Activated CD4-positive, alpha-beta T cell treated with anti-CD3 and anti-CD28 coated beads for 36 hours (primary cell): ENCODE measurements at regions of chr3 and their contacts with region 1.

Region 1: GRCh38 chr3:47781685-47782445 is at the start of gene SMARCC1:
- DNase-seq: peak; percentile 99
- ATAC-seq: peak; percentile 93
- H3K4me3 Mint-ChIP-seq: peak within 1 kb of the TSS; percentile 99
- H3K27ac Mint-ChIP-seq: peak within 1 kb of the TSS; percentile 97
- H3K4me1 Mint-ChIP-seq: peaks cover 21% of the 10 kb centered on the region
- H3K27me3 Mint-ChIP-seq: no peaks in the 10 kb centered on the region
- total RNA-seq, gene SMARCC1: 129 to 130 TPM

Region 2: DNA sequence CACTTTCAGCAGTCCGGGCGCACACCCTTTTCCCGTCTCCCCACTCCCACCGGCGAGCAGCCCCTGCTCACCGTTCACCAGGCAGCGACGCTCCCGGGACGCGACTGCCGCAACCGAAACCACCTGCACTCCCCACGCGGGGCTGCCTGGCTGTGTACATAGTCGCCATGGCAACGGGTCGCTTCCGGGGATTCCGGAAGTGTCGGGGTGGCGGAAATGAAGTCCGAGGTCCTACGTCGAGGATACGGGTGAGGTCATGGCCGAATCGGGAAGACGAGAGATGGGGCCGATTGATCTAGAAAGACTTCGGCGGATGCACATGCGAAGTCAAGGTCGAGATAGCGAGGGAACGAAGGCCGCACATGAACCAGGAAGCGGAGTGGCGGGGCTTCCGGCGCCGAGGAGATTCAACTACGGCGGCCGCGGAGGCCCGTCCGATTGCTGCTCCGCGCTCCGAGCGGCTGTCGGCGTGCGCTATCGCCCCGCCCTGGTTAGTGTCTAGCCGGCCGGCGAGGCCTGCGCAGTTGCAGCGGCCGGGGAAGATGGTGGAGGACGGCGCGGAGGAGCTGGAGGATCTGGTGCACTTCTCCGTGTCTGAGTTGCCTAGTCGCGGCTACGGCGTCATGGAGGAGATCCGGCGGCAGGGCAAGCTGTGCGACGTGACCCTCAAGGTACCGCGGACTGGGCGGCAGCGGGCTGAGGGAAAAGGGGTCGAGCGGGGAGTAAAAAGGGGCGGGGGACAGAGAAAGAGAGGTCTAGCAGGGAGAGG is 499.3 kb before region 1 on chr3 and contains the starts of genes KIF9 and KLHL18:
- CTCF ChIA-PET with region 1: no interaction called
- POLR2A ChIA-PET with region 1: no interaction called
- intact Hi-C with region 1: loop called in 1 of 2 experiments (anchors 1 kb)
- DNase-seq: peak; percentile 97
- ATAC-seq: peak; percentile 91
- H3K4me3 Mint-ChIP-seq: peak within 1 kb of the TSS; percentile 95
- H3K27ac Mint-ChIP-seq: peak within 1 kb of the TSS; percentile 99
- H3K4me1 Mint-ChIP-seq: peaks cover 31% of the 10 kb centered on the region
- H3K27me3 Mint-ChIP-seq: no peaks in the 10 kb centered on the region
- total RNA-seq, gene KIF9: 2.7 to 5.3 TPM
- total RNA-seq, gene KLHL18: 19.0 to 22.4 TPM

Region 3: GRCh38 chr3:47475570-47476329 is 306.1 kb before region 1 on chr3 and contains the start of gene SCAP:
- CTCF ChIA-PET with region 1: no interaction called
- POLR2A ChIA-PET with region 1: no interaction called
- intact Hi-C with region 1: loop called in 1 of 2 experiments (anchors 1 kb)
- DNase-seq: peak; percentile 98
- ATAC-seq: peak; percentile 95
- H3K4me3 Mint-ChIP-seq: peak within 1 kb of the TSS; percentile 89
- H3K27ac Mint-ChIP-seq: peak within 1 kb of the TSS; percentile 84
- H3K4me1 Mint-ChIP-seq: peaks cover 33% of the 10 kb centered on the region
- H3K27me3 Mint-ChIP-seq: no peaks in the 10 kb centered on the region
- total RNA-seq, gene SCAP: 44.5 to 51.2 TPM

Region 4: GRCh38 chr3:47578119-47578632 is 203.7 kb before region 1 on chr3:
- CTCF ChIA-PET with region 1: no interaction called
- POLR2A ChIA-PET with region 1: no interaction called
- intact Hi-C with region 1: loop called in 1 of 2 experiments (anchors 1 kb)
- DNase-seq: peak; percentile 61
- ATAC-seq: peak; percentile 75
- H3K4me3 Mint-ChIP-seq: peak overlapping the region; percentile 52
- H3K27ac Mint-ChIP-seq: no peak overlapping the region
- H3K4me1 Mint-ChIP-seq: no peaks in the 10 kb centered on the region
- H3K27me3 Mint-ChIP-seq: peaks cover 18% of the 10 kb centered on the region

Region 5: DNA sequence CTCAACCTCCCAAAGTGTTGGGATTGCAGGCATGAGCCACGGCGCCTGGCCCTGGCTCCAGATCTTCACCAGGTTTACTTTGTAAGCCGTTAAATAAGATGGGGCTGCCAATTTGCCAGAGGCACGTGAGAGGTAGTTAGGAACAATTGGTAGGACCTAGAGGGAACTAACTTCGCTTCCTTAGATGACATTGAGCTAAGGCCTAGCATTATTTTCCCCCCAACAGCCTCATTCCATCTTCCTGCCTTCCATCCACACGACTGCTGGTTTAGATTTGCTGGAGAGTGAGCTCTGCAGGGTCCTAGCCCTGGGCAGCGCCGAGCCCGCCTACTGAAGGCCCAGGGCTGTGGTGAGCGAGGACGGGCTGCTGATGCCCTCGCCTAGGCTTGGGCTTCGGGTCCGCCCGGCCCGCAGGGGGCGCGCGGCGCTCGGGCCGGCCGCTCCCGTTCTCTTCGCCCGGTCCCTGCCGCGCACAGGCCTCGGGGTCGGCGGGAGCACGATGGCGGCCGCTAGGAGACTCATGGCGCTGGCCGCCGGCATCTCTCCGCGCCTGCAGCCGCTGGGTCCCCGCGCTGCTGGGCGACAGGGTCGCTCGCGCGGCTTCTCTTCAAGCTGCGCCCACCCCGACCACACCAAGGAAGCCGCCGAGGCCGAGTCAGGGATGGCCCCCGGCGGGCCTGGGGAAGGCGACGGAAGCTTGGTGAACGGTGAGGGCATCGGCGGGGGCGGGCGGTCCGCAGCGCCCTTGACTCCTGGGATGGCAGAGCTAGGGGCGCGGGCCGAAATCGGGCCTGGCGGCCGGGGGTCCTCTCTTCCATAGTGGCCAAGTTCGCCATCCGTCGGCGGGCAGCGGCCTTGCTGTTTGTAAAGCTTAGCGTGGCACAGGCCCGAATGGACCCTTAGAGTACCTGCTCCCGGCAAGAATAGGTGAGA is 42.9 kb after region 1 on chr3:
- CTCF ChIA-PET with region 1: no interaction called
- POLR2A ChIA-PET with region 1: no interaction called
- intact Hi-C with region 1: loop called in 1 of 2 experiments (anchors 1 kb)
- DNase-seq: peak; percentile 88
- ATAC-seq: peak; percentile 98
- H3K4me3 Mint-ChIP-seq: peak overlapping the region; percentile 90
- H3K27ac Mint-ChIP-seq: peak overlapping the region; percentile 80
- H3K4me1 Mint-ChIP-seq: peaks cover 36% of the 10 kb centered on the region
- H3K27me3 Mint-ChIP-seq: no peaks in the 10 kb centered on the region

Region 6: DNA sequence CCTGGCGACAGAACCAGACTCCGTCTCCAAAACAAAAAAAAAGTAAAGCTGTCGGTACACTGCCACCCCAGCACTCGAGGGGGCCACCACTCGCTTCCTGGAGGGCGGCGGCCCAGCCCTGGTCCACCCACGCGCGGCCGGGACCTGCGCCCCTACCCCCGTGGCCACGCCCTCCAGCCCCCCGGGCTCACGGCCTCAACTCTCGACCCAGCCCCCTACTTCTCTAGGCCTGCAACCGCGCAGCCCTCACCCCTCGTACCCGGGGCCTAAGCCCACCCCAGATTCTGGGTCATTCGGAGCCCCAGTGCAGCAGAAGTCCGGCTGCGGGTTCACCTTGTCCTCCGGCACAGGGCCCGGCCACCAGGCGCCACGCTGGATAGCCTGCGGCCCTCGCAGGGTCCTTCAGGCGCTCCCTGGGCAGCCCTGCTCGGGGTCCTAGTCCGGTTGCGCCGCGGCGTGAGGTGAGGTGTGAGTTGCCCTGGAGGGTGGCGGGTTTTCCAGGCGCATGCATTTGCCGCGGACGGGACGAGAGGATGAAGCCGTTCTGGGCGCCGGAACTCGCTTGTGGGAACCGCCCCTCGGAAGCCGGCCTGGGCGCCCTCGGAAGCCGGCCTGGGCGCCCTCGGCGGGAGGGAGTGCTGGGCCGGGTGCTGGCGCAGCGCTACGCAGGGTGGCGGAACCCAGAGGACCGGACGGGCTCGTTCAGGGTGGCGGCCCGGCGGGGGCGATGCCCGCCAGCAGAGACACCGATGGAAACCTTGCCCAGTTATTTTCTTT is 519.3 kb after region 1 on chr3:
- CTCF ChIA-PET with region 1: no interaction called
- POLR2A ChIA-PET with region 1: no interaction called
- intact Hi-C with region 1: loop called in 1 of 2 experiments (anchors 1 kb)
- DNase-seq: peak; percentile 97
- ATAC-seq: peak; percentile 85
- H3K4me3 Mint-ChIP-seq: peak within 1 kb of the TSS; percentile 92
- H3K27ac Mint-ChIP-seq: peak within 1 kb of the TSS; percentile 98
- H3K4me1 Mint-ChIP-seq: peaks cover 27% of the 10 kb centered on the region
- H3K27me3 Mint-ChIP-seq: no peaks in the 10 kb centered on the region

Region 7: GRCh38 chr3:48514436-48515227 is 732.8 kb after region 1 on chr3:
- CTCF ChIA-PET with region 1: no interaction called
- POLR2A ChIA-PET with region 1: no interaction called
- intact Hi-C with region 1: no loop called
- DNase-seq: peak; percentile 39
- ATAC-seq: peak; percentile 48
- H3K4me3 Mint-ChIP-seq: no peak overlapping the region
- H3K27ac Mint-ChIP-seq: no peak overlapping the region
- H3K4me1 Mint-ChIP-seq: peaks cover 62% of the 10 kb centered on the region
- H3K27me3 Mint-ChIP-seq: no peaks in the 10 kb centered on the region